HepG2 (cell line): ENCODE measurements at regions of chr12 and their contacts with region 1.

Region 1: DNA sequence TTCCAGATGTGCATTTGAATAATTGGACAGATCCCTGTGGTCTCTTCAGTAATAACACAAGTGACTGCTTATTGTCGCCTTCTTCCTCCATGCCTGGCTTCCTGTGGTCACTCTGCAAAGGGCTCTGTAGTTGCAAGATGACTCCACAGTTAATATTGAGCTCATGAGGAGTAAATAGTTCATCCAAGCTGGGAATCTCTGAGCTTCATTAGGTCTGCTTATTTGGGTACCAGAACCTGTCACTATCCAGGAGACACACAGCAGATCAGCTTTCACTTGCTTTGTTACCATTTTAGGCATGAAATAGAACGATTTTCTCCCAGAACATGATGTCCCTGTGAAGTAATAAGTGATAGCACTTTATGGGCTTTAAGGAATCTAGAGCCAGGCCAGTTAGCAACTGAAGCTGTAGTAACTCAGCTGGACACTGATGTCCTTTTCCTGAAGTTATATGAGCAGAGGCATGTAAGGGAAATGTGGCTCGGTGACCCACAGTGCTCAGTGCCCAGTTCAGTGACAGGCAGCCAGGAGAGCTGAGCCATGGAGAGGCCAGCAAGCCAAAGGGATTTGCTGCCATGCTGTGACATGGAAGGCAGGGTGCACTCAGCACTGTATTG is 50.1 kb downstream of the CRADD start:
- DNase-seq: no peak
- ATAC-seq: peak; percentile 94
- H3K4me3 ChIP-seq: peak overlapping the region in 1 of 3 experiments; percentile 20; a peak in 1 of 6 replicates
- H3K27ac ChIP-seq: peak overlapping the region; percentile 76
- H3K4me1 ChIP-seq: peaks cover 48% of the 10 kb centered on the region
- H3K27me3 ChIP-seq: no peaks in the 10 kb centered on the region
- CTCF ChIP-seq: 0 out of 2 replicates have a peak, but pooled peaks have one; percentile 12
- EP300 ChIP-seq: no peak
- POLR2A ChIP-seq: no peak
- RAD21 ChIP-seq: no peak

Region 2: DNA sequence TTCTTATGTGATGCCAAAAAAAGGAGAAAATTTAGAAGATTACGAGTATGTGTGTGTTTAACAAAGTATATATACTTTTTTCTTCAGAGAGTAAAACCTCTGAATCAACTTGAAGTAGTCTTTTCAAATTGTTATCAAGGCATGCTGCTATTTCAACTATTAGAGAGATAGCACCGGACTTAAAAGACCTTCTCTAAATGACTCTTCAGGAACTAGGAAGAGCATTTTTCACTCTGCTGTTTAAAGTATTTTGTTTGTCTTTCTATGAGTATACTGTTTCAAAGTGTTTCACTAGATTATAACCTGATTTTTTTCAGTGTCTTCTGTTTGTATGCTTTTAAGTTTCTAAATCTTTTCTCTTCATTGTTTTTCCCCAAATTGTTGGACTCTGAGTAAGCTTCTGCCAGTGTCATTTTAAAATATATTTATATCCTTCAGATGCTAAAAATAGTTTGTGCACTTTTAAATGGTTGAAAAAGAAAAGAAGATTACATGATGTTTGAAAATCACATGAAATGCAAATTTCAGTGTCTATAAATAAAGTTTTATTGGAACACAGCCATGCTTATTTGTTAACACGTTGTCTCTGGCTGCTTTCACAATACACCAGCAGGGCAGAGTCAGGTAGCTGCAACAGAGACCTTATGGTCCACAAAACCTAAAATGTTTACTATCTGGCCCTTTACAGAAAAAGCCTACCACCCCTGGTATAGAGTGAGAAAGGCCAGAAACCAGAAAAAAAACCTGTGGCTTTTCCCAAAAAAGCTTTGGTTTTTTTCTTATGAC is 28.8 kb before region 1 on chr12:
- CTCF ChIA-PET with region 1: no interaction called
- POLR2A ChIA-PET with region 1: no interaction called
- in situ Hi-C with region 1: no loop called
- intact Hi-C with region 1: loop called (anchors 1 kb)
- DNase-seq: peak; percentile 66
- ATAC-seq: peak; percentile 38; the same call in 1 of the 3 replicates
- H3K4me3 ChIP-seq: no peak overlapping the region
- H3K27ac ChIP-seq: peak overlapping the region; percentile 34
- H3K4me1 ChIP-seq: peaks cover 23% of the 10 kb centered on the region
- H3K27me3 ChIP-seq: no peaks in the 10 kb centered on the region
- CTCF ChIP-seq: no peak
- EP300 ChIP-seq: no peak
- POLR2A ChIP-seq: no peak
- RAD21 ChIP-seq: no peak